Common myeloid progenitor, CD34-positive (primary cell): ENCODE measurements at regions of chr4 and their contacts with region 1.

Region 1: GRCh38 chr4:98995183-98996055 is at the start of gene METAP1:
- DNase-seq: peak; percentile 98
- H3K4me3 ChIP-seq: peak within 1 kb of the TSS; percentile 81 to 97 (median 92)
- H3K27ac ChIP-seq: peak within 1 kb of the TSS; percentile 67 to 86
- H3K4me1 ChIP-seq: peaks cover 4 to 22% (median 10%) of the 10 kb centered on the region in 4 experiments
- H3K27me3 ChIP-seq: no peaks in the 10 kb centered on the region

Region 2: DNA sequence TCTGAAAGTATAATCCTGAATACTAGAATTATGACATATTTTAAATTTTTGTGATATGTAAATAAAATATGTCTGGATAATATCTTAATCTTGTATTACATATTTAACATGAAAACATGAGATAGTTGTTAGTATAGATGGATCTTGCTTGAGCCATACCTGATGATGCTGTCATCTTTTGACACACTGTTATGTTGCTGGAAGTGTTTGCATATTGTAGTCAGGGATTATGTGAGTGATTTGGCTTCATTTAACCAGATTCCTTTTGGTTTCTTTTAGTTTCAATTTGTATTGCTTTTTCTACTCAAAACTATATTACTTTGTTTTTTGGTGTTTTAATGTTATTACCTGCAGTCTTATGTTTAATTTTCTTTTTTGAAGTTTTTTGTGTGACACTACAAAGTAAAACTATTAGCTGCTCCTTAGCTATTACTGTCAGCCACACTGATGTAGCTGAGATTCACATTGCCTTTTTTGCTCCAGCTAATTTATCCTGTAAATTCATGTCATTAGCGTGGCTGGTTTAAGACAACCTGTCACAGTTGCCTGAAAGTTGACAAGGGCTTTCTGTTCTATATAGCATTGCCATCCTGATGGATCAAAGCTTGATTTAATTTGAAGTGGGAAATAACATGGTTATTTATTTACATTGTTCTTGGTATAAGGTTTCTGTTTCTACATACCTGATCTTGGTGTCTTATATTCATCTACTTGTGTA is 33.8 kb after region 1 on chr4:
- CTCF ChIA-PET with region 1: interaction called, 10 read pairs
- POLR2A ChIA-PET with region 1: no interaction called
- DNase-seq: peak in 1 of 3 donors; percentile 22
- H3K4me3 ChIP-seq: peak overlapping the region in 1 of 7 experiments; percentile 1
- H3K27ac ChIP-seq: peak overlapping the region in 1 of 2 experiments; percentile 9
- H3K4me1 ChIP-seq: peaks cover 0 to 12% (median 3%) of the 10 kb centered on the region in 4 experiments
- H3K27me3 ChIP-seq: no peaks in the 10 kb centered on the region

Region 3: DNA sequence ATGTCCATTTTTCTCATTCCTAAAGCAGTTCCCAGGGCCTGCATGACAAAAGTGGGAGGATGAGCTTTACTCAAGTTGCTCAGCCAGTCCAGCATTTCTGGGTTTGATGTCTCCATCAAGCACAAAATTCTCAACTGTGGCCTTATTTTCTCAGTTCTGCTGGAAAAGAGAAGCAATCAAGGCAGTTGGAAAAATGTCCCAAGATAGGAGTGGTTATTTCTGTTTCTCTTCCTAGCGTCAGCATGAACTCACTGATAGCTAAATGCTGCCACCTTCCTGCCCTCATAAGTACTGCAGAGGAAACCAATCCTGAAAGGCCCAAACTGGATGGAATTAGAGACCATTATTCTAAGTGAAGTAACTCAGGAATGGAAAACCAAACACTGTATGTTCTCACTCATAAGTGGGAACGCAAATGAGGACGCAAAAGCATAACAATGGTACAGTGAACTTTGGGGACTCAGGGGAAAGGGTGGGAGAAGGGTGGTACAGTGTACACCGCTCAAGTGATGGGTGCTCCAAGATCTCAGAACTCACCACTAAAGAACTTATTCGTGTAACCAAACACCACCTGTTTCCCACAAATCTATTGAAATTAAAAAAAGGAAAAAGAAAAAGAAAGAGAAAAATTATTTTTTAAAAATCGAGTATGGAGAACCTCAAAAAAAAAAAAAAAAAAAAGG is 410.2 kb after region 1 on chr4:
- CTCF ChIA-PET with region 1: interaction called, 17 read pairs
- POLR2A ChIA-PET with region 1: no interaction called
- DNase-seq: peak; percentile 52 to 77 (median 69)
- H3K4me3 ChIP-seq: no peak overlapping the region
- H3K27ac ChIP-seq: no peak overlapping the region
- H3K4me1 ChIP-seq: no peaks in the 10 kb centered on the region
- H3K27me3 ChIP-seq: no peaks in the 10 kb centered on the region